ENCODE measurements at regions of chr2 and their contacts with region 1.

Region 1: GRCh38 chr2:85826990-85827878 is 61.6 kb downstream of the ST3GAL5 start:
- DNase-seq: peak; percentile 83
- ATAC-seq: peak; percentile 95 to 96
- H3K4me3 ChIP-seq: peak overlapping the region; percentile 21
- H3K27ac ChIP-seq: no peak overlapping the region
- H3K4me1 ChIP-seq: peaks cover 4% of the 10 kb centered on the region
- H3K27me3 ChIP-seq: no peaks in the 10 kb centered on the region
- CTCF ChIP-seq: peak; percentile 92

Region 2: GRCh38 chr2:86079981-86080911 is 253.0 kb after region 1 on chr2:
- intact Hi-C with region 1: loop called (anchors 5 kb)
- DNase-seq: peak; percentile 89
- ATAC-seq: peak; percentile 90 to 91
- H3K4me3 ChIP-seq: no peak overlapping the region
- H3K27ac ChIP-seq: no peak overlapping the region
- H3K4me1 ChIP-seq: peaks cover 24% of the 10 kb centered on the region
- H3K27me3 ChIP-seq: no peaks in the 10 kb centered on the region
- CTCF ChIP-seq: peak; percentile 84